Astrocyte of the cerebellum (primary cell): ENCODE measurements at regions of chr2 and their contacts with region 1.

Region 1: DNA sequence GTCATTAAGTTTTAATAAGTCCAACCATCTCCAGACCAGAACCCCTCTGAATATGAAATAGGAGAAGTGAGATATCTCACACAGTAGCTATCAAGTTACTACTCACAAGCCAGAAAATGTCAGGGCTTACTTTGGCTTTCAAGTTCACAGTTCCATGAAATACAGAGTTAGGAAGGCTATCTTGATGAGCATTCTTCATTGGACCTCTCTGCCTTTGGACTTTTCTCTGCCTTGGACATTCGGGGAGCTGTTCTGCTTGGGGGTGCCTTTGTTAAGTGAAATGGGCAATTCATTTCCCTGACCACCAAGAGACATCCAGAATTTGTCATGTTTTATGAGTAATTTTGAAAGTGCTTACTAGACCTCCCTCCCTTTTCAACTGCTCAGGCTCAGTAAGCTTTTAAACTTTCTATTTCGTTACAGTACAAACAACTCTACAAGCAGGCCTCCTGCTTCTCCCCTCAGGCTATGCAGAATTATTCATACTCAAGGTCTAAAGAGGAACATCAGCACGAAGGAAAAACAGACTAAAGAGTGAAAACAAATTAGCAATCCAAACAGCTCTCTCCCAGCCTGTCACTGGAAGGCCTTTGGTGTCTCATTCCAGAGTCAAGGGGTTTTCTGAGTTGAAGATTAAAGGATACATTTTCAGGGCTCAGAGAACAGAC is 95.3 kb downstream of the MREG start:
- DNase-seq: peak; percentile 43
- H3K4me3 ChIP-seq: no peak overlapping the region
- CTCF ChIP-seq: no peak

Region 2: DNA sequence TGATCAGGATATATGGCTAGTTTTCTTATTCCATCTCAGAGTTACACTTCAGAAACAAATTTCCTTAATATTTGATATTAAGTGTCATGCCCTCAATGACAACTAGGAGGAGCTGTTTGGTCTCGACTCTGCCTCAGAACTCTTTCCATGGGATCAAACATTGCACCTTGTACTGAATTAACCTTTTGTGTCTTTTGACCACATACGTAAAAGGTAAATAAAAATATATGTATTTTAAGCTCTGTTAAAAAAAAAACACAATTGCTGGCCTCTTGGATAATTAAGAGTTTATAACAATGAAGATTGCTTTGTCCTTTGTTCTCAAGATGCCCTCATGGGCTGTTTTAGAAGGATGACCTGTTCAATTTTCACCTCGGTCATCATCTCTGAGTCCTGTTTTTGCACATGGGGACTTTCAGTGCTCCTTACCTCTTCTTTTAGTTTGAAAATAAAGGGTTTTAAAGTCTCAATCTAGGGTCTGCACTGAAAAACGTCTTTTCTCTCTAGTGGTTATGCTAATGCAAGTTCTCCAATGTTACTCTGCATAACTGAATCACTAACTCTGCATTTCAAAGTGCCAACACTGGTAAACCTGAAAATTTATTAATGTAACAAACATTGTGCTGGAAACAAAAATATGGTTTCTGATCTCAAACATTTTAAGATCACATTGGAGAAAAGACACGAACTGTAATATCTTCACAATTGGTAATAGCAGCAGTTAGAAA is 463.4 kb before region 1 on chr2:
- in situ Hi-C with region 1: loop called (anchors 10 kb)
- DNase-seq: no peak
- H3K4me3 ChIP-seq: no peak overlapping the region
- CTCF ChIP-seq: peak; percentile 76

Region 3: DNA sequence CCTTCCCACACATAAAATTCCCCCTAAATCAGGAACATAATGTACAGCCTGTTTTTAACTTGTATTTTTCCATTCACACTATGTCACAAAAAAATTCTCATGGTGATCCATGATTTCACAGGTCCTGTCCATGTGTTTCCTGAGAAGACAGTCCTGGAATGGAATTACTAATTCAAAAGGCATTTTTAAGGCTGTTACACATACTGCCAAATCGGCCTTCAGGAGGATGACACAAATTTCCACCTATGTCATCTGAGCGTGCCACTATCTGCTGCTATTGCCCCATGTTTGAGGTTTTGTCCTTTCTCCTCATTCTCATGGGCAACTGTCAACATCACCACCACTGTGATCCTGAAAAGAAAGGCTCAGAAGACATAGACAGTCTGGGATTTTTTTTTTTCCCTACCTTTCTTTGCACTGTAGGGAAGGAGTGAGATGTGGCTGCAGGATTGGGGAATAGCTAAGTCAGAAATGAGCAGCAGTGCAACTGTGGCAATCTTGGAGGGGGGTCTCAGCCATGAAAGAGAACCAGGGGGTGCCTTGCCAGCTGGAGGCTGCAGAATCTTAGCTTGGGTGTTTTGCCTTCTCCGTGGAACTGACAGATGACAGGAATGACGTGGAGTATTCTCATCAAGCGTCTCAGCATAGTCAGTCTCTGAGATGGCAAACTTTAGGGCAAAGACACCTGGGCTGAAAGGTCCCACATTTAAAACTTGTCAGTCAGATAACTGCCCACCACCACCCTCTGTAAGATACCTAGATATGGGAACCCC is 380.8 kb after region 1 on chr2:
- in situ Hi-C with region 1: no loop called
- DNase-seq: no peak
- H3K4me3 ChIP-seq: no peak overlapping the region
- CTCF ChIP-seq: no peak